Aorta (tissue), 5 donors: ENCODE measurements at regions of chr4 and their contacts with region 1.

Region 1: DNA sequence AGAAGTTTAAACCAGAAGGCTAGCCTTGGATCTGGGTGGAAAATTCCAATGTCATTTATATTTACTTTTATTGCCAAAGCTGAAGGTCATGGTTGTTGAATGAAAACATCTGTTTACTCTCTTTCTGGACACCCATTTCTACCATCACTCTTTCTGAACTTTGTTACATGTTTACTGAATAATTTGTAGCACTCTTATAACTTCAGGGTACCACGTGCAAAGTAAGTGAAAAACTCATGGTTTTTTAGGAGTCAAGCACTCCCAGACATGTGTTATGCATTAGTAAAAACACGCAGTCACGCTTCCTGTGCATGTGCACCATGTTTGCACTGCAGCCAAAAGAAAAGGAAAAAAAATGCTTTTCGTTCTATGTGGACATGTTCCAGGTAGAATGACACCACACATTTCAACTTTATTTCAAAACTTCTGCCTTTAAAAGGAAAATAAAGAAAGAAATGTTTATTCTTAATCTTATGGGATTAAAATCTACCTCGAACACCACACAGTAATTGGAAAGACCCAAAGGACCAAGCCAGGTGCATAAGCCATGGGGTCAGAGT is 31.4 kb upstream of the ADH1C start:
- DNase-seq: peak in 1 of 2 donors; percentile 56
- ATAC-seq: peak; percentile 91
- H3K4me3 ChIP-seq: no peak overlapping the region
- H3K27ac ChIP-seq: peak overlapping the region in 1 of 2 donors; percentile 95
- H3K4me1 ChIP-seq: no peaks in the 10 kb centered on the region
- H3K27me3 ChIP-seq: no peaks in the 10 kb centered on the region

Region 2: GRCh38 chr4:99324979-99325378 is 58.9 kb before region 1 on chr4:
- intact Hi-C with region 1: loop called in 1 of 2 experiments (anchors 5 kb)
- DNase-seq: peak; percentile 76
- ATAC-seq: peak; percentile 81
- H3K4me3 ChIP-seq: no peak overlapping the region
- H3K27ac ChIP-seq: no peak overlapping the region
- H3K4me1 ChIP-seq: peaks cover 0 to 5% of the 10 kb centered on the region in 2 donors
- H3K27me3 ChIP-seq: no peaks in the 10 kb centered on the region